Activated CD4-positive, alpha-beta T cell treated with anti-CD3 and anti-CD28 coated beads for 36 hours (primary cell): ENCODE measurements at regions of chr2 and their contacts with region 1.

Region 1: DNA sequence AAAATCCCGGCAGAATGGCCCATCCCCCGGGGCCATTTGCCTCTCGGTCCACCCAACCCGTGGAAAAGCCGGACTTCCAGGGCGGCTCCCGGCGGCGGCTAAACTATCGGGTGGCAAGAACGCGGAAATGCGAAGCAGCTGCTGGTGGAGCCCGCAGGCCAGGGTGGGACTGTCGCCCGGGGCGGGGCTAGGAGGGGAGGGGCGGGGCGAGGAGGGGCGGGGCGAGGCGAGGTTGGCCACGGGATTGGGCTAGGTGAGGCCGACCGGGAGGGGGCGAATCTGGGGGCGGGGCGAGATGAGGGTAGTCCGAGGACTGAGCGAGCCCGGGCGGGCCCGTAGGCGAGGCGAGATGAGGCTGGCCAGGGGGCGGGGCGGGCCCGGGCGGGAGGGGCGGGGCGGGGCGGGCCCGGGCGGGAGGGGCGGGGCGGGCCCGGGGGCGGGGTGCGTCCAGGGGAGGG is 315 bp upstream of the SLC66A3 start:
- DNase-seq: peak; percentile 100
- ATAC-seq: peak; percentile 95
- H3K4me3 Mint-ChIP-seq: peak overlapping the region; percentile 73
- H3K27ac Mint-ChIP-seq: peak overlapping the region; percentile 83
- H3K4me1 Mint-ChIP-seq: peaks cover 15% of the 10 kb centered on the region
- H3K27me3 Mint-ChIP-seq: no peaks in the 10 kb centered on the region

Region 2: GRCh38 chr2:11203480-11203879 is 48.5 kb after region 1 on chr2:
- CTCF ChIA-PET with region 1: no interaction called
- POLR2A ChIA-PET with region 1: no interaction called
- intact Hi-C with region 1: loop called in 1 of 2 experiments (anchors 1 kb)
- DNase-seq: no peak
- ATAC-seq: peak; percentile 92
- H3K4me3 Mint-ChIP-seq: no peak overlapping the region
- H3K27ac Mint-ChIP-seq: peak overlapping the region; percentile 19
- H3K4me1 Mint-ChIP-seq: peaks cover 15% of the 10 kb centered on the region
- H3K27me3 Mint-ChIP-seq: no peaks in the 10 kb centered on the region

Region 3: GRCh38 chr2:11344342-11344955 is 189.5 kb after region 1 on chr2 and contains the start of gene ROCK2:
- CTCF ChIA-PET with region 1: no interaction called
- POLR2A ChIA-PET with region 1: no interaction called
- intact Hi-C with region 1: loop called (anchors 1 to 2 kb)
- DNase-seq: peak; percentile 81
- ATAC-seq: peak; percentile 68
- H3K4me3 Mint-ChIP-seq: peak within 1 kb of the TSS; percentile 97
- H3K27ac Mint-ChIP-seq: peak within 1 kb of the TSS; percentile 89
- H3K4me1 Mint-ChIP-seq: peaks cover 31% of the 10 kb centered on the region
- H3K27me3 Mint-ChIP-seq: no peaks in the 10 kb centered on the region
- total RNA-seq, gene ROCK2: 14.4 to 16.7 TPM

Region 4: DNA sequence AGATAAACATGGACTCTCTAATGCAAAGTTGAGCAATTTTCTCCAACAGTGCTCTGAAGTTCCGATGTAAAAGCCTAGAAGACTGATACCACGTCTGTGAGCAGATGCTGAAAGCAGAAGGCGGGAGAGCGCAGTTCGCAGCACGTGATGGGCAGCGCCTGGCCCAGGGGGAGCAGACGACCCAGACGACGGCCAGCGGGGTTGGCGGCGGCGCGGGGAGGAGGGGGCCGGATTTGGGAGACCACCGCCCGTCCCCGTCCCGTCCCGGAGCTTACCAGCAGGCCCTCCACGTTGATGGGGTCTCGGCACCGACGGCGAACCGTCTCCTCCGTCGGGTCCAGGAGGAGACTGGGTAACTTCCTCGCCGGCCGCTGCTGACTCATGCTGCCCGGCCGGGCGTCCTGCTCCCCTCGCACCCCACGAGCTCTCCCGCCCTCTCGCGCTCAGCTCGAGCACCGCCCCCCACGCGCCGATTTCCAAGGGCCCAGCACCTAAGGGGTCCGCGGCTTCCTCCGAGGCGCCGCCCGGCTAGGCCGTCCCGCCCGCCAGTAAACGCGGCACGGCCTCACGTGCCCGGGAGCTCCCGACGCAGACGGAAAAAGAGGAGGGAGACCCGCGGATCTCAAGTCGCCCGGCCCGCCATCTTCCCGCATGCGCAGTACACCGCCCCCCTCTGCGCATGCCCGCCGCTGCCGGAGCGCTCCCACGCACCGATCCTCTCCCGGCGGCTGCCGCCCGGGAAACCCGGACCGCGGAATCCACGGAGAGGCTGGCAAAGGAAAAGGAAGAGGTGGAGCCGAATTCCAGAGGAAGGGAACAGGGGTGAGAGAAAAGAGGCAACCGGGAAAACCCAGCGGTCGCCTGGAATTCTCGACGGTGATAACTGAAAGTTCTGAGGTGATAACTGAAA is 310.8 kb after region 1 on chr2 and contains the start of gene E2F6:
- CTCF ChIA-PET with region 1: no interaction called
- POLR2A ChIA-PET with region 1: no interaction called
- intact Hi-C with region 1: loop called in 1 of 2 experiments (anchors 1 kb)
- DNase-seq: peak; percentile 92
- ATAC-seq: peak; percentile 85
- H3K4me3 Mint-ChIP-seq: peak within 1 kb of the TSS; percentile 81
- H3K27ac Mint-ChIP-seq: peak within 1 kb of the TSS; percentile 92
- H3K4me1 Mint-ChIP-seq: peaks cover 33% of the 10 kb centered on the region
- H3K27me3 Mint-ChIP-seq: no peaks in the 10 kb centered on the region
- total RNA-seq, gene E2F6: 7.2 to 10.6 TPM

Region 5: DNA sequence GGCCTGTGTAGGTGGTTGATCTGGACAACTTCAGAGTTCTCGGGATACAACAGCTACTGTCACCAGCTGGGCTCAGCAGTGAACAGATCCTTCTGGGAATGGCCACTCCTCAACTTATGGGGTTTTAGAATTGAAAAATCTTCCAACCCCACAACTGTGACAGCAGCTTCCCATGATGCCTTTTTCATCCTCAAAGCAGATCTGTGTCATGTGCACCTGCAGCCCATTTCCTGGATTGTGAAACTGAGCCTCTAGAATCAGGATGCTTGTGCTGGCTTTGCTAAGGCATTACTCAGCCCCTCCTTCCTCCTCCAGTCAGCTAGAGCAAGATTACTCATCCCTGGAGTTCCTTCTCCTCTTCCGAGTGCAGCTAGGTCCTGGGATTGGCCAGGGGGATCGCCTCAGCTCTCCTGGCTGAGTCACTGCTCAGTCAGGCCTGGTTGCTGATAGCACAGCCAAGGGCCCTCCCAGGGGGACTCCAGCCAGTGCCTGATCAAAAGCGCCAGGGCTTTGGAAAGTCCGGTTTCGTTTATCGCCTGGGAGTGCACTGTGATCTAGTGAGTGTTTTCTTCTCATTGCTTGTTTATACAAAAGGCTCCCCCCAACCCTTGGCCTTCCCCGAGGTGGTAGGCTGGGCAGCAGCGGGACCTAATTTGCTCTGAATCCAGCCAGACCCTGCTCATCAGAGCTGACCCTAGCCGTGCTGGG is 589.0 kb after region 1 on chr2:
- CTCF ChIA-PET with region 1: no interaction called
- POLR2A ChIA-PET with region 1: no interaction called
- intact Hi-C with region 1: loop called in 1 of 2 experiments (anchors 1 kb)
- DNase-seq: peak; percentile 90
- ATAC-seq: peak; percentile 83
- H3K4me3 Mint-ChIP-seq: peak overlapping the region; percentile 34
- H3K27ac Mint-ChIP-seq: peak overlapping the region; percentile 73
- H3K4me1 Mint-ChIP-seq: peaks cover 54% of the 10 kb centered on the region
- H3K27me3 Mint-ChIP-seq: no peaks in the 10 kb centered on the region